K562 (cell line): ENCODE measurements at regions of chr2 and their contacts with region 1.

Region 1: DNA sequence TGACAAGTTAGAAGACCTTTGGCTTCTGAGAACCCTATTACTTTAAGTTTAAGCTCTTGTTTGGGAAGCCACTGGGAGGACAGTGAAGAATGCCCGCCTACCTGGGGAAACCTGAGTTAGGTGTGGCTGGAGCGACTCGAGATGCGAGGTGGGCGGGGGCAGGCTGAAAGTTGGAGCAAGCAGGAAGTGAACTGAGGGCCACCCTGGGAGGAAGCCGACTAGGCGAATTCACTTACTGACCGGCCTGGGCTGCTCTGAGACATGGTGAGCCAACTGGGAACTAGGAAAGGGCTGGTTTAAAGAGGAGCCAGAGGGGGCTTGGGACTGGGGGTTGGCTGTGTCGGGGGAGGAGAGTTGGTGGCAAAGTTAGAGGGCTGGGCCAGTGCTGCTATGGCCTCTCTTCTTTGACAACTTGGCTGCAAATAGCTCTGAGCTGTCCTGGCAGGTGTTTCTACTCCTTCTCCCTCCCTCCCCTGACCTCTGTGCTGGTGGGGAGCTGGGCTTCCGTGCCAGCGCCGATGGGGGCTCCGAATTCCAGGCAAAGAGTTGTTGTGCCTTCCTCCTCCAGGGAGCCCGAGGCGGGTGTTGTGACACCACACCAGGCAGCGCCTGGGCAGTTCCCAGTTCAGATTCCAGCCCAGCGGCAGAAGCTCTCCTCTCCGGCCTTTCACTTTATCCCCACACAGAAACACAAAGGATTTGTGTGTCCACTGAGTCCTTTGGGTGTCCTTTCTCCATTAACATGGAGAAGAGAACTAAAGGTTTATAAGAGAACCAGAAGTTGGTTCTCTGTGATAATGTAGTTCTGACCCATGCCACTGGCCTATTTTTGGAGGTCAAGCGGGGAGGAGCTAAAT is at the start of gene VAMP8:
- DNase-seq: peak; percentile 74 to 87 (median 82)
- ATAC-seq: peak; percentile 84
- H3K4me3 ChIP-seq: peak within 1 kb of the TSS; percentile 48
- H3K27ac ChIP-seq: peak within 1 kb of the TSS; percentile 81
- H3K4me1 ChIP-seq: peaks cover 19 to 25% of the 10 kb centered on the region in 2 experiments
- H3K27me3 ChIP-seq: no peaks in the 10 kb centered on the region
- CTCF ChIP-seq: no peak
- EP300 ChIP-seq: no peak
- POLR2A ChIP-seq: peak; percentile 75
- RAD21 ChIP-seq: no peak; a peak in 1 of 4 replicates
- polyA plus RNA-seq, gene VAMP8: 566 to 571 TPM

Region 2: GRCh38 chr2:84177733-84178132 is 1399.9 kb before region 1 on chr2:
- CTCF ChIA-PET with region 1: no interaction called
- POLR2A ChIA-PET with region 1: no interaction called
- in situ Hi-C with region 1: no loop called
- intact Hi-C with region 1: no loop called
- DNase-seq: no peak
- ATAC-seq: no peak
- H3K4me3 ChIP-seq: no peak overlapping the region
- H3K27ac ChIP-seq: no peak overlapping the region
- H3K4me1 ChIP-seq: no peaks in the 10 kb centered on the region
- H3K27me3 ChIP-seq: no peaks in the 10 kb centered on the region; a peak in 1 of 5 replicates
- CTCF ChIP-seq: no peak
- EP300 ChIP-seq: no peak
- POLR2A ChIP-seq: no peak
- RAD21 ChIP-seq: no peak

Region 3: DNA sequence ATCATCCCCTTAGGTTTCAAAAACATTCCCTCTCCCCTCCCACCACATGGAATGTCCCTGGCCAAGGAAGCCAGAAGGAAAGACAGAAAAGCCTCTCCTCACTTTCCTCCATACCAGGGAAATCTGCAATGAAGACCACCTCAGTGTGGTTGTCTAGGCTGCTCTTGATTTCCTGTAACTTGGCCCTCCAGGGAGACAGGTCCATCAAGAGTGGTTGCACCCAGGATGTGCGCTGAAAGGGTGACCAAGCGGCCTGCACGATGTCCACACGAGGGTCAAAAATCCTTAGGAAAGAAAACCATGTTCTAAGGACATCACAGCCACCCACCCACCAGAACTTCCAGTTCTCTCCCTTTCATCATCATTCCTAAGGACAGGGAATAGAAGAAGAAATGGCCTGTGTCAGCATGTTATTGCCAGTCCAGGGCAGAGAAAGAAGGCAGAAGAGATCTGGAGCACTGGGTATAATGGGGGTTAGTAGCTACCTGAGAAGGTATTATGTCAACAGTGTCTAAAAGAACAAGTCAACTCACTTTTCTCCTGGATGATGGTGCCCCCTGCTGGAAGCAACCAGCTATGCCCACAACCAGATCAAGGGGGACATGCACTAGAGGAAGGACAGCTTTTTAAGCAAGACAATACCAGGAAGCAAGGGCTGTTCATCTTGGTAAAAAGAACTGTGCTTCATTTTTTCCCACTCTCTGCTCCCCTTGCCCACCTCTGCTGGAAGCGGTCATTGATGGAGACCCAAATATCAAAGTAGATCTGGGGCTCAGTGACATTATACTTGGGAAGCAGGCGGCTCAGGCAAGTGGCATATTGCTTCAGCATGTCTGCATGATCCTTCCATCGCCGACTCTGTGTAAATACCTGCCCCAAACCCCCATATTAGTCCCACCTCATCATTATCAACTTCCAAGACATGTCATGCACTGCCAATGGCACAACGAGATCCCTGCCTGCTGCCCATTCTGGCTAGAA is 25.6 kb before region 1 on chr2:
- CTCF ChIA-PET with region 1: no interaction called
- POLR2A ChIA-PET with region 1: interaction called, 12 read pairs
- in situ Hi-C with region 1: no loop called
- intact Hi-C with region 1: no loop called
- DNase-seq: peak; percentile 64 to 88 (median 72)
- ATAC-seq: peak; percentile 81
- H3K4me3 ChIP-seq: no peak overlapping the region
- H3K27ac ChIP-seq: no peak overlapping the region; the same call in 2 of the 3 replicates
- H3K4me1 ChIP-seq: no peaks in the 10 kb centered on the region; a peak in 1 of 5 replicates
- H3K27me3 ChIP-seq: no peaks in the 10 kb centered on the region
- CTCF ChIP-seq: peak; percentile 83 to 95 (median 91)
- EP300 ChIP-seq: no peak
- POLR2A ChIP-seq: no peak
- RAD21 ChIP-seq: peak; percentile 97 to 98

Region 4: GRCh38 chr2:85589982-85590791 is 12.6 kb after region 1 on chr2:
- CTCF ChIA-PET with region 1: no interaction called
- POLR2A ChIA-PET with region 1: interaction called, 23 read pairs
- in situ Hi-C with region 1: no loop called
- intact Hi-C with region 1: no loop called
- DNase-seq: no peak
- ATAC-seq: no peak
- H3K4me3 ChIP-seq: no peak overlapping the region
- H3K27ac ChIP-seq: no peak overlapping the region
- H3K4me1 ChIP-seq: peaks cover 31 to 34% of the 10 kb centered on the region in 2 experiments
- H3K27me3 ChIP-seq: no peaks in the 10 kb centered on the region
- CTCF ChIP-seq: no peak
- EP300 ChIP-seq: no peak
- POLR2A ChIP-seq: no peak
- RAD21 ChIP-seq: no peak

Region 5: GRCh38 chr2:85595301-85596025 is 17.8 kb after region 1 on chr2 and contains the start of gene RNF181:
- CTCF ChIA-PET with region 1: no interaction called
- POLR2A ChIA-PET with region 1: interaction called, 23 read pairs
- in situ Hi-C with region 1: no loop called
- intact Hi-C with region 1: no loop called
- DNase-seq: peak; percentile 94 to 99 (median 96)
- ATAC-seq: peak; percentile 98
- H3K4me3 ChIP-seq: peak within 1 kb of the TSS; percentile 62
- H3K27ac ChIP-seq: peak within 1 kb of the TSS; percentile 74
- H3K4me1 ChIP-seq: peaks cover 6 to 29% of the 10 kb centered on the region in 2 experiments
- H3K27me3 ChIP-seq: no peaks in the 10 kb centered on the region
- CTCF ChIP-seq: no peak
- EP300 ChIP-seq: no peak
- POLR2A ChIP-seq: peak; percentile 93
- RAD21 ChIP-seq: no peak
- polyA plus RNA-seq, gene RNF181: 425 to 485 TPM

Region 6: GRCh38 chr2:85602476-85603234 is 25.0 kb after region 1 on chr2 and contains the start of gene TMEM150A:
- CTCF ChIA-PET with region 1: no interaction called
- POLR2A ChIA-PET with region 1: interaction called, 10 read pairs
- in situ Hi-C with region 1: no loop called
- intact Hi-C with region 1: no loop called
- DNase-seq: peak; percentile 88 to 94 (median 90)
- ATAC-seq: peak; percentile 97
- H3K4me3 ChIP-seq: peak within 1 kb of the TSS; percentile 79
- H3K27ac ChIP-seq: peak within 1 kb of the TSS; percentile 27
- H3K4me1 ChIP-seq: peaks cover 9 to 34% of the 10 kb centered on the region in 2 experiments; a peak in 4 of 5 replicates
- H3K27me3 ChIP-seq: no peaks in the 10 kb centered on the region
- CTCF ChIP-seq: peak; percentile 22 to 57 (median 45); a peak in 4 of 6 replicates
- EP300 ChIP-seq: no peak
- POLR2A ChIP-seq: peak; percentile 24; the same call in 1 of the 2 replicates
- RAD21 ChIP-seq: peak; percentile 43 to 46; a peak in 3 of 4 replicates
- polyA plus RNA-seq, gene TMEM150A: 3.9 to 5.3 TPM

Region 7: DNA sequence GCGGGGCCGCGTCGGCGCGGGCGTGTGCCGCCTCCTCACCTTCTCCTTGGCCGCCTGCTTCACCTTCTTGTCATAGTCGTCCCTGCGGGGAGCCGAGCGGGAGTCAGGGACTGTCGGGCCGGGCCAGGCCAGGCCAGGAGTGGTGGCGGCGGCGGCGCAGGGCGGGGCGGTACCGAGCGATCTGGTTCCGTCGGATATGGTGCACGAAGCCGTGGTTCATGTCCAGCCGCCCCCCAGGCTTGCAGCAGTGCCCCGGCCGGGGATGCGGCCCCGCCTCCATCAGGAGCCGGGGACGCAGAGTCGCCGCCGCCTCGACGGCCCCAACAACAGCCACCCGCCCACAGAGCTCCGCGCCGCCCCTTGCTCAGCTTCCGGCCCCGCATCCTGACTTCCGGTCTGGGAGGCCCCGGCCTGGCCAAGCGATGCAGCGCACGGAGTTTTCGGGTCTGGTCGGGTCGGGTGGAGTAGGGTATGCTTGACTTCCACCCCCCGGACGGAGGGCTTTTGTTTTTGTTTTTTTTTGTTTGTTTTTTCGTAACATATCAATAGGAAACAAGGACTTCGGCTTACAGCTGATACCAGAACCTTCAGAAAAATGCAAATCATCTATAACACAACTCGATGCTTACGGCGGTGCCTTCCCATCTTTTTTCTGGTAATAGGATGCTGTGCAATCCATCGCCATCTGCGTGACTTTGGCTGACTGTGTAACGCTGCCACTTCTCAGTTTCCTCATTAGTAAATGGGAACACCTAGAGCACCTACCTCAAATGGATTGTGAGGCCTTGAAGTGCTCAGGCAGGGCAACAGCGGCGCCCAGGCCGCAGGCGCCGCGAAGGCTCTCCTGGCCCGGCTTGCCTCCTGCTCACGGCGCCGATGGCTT is 34.3 kb after region 1 on chr2 and contains the start of gene C2orf68:
- CTCF ChIA-PET with region 1: no interaction called
- POLR2A ChIA-PET with region 1: interaction called, 3 read pairs
- in situ Hi-C with region 1: no loop called
- intact Hi-C with region 1: loop called (anchors 5 kb)
- DNase-seq: peak; percentile 88 to 96 (median 91)
- ATAC-seq: peak; percentile 87
- H3K4me3 ChIP-seq: peak within 1 kb of the TSS; percentile 83
- H3K27ac ChIP-seq: peak within 1 kb of the TSS; percentile 75
- H3K4me1 ChIP-seq: peaks cover 4 to 33% of the 10 kb centered on the region in 2 experiments; a peak in 4 of 5 replicates
- H3K27me3 ChIP-seq: no peaks in the 10 kb centered on the region
- CTCF ChIP-seq: 0 out of 6 replicates have a peak, but pooled peaks of 1 of the 3 experiments have one; percentile 11
- EP300 ChIP-seq: 0 out of 2 replicates have a peak, but pooled peaks have one; percentile 12
- POLR2A ChIP-seq: peak; percentile 94
- RAD21 ChIP-seq: no peak
- polyA plus RNA-seq, gene C2orf68: 33.1 to 33.4 TPM